ENCODE measurements at regions of chr17 and their contacts with region 1.

Region 1: DNA sequence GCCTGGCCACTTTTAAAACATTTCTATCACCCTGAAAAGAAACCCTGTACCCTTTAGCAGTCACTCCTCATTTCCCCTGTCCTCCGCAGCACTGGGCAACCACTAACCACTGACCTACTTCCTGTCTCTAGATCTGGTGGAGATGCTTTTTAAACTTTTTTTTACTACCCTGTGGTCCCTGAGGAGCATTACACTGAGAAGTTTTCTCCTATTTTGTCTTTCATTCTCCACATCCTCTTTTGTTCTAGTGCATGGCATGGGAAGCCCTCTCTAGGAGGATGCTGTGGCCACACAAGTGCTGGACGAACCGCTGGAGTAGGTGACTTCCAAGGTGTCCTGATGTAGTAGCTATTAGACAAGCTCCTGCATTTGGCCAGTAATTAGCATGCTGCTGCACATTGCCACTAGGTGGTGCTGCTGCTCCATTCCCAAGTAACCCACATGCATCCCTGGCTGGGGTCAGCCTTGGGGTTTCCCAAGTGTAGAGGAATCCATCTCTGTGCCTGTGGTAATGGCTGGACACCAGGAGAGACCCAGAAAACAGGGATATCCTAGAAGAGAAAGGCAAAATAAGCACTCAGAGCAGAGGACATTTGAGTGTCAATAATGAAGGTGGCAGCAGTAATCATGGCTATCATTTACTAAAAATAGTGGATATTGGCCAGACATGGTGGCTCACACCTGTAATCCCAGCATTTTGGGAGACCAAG is 143.8 kb upstream of the CRHR1 start:
- DNase-seq: peak; percentile 67
- ATAC-seq: peak; percentile 86 to 90
- H3K4me3 ChIP-seq: no peak overlapping the region
- H3K27ac ChIP-seq: no peak overlapping the region
- H3K4me1 ChIP-seq: no peaks in the 10 kb centered on the region
- H3K27me3 ChIP-seq: no peaks in the 10 kb centered on the region
- CTCF ChIP-seq: peak; percentile 92

Region 2: GRCh38 chr17:45747911-45748310 is 107.6 kb after region 1 on chr17:
- intact Hi-C with region 1: no loop called
- DNase-seq: no peak
- ATAC-seq: no peak
- H3K4me3 ChIP-seq: no peak overlapping the region
- H3K27ac ChIP-seq: no peak overlapping the region
- H3K4me1 ChIP-seq: no peaks in the 10 kb centered on the region
- H3K27me3 ChIP-seq: peaks cover 14% of the 10 kb centered on the region
- CTCF ChIP-seq: no peak

Region 3: GRCh38 chr17:45834471-45835396 is 194.4 kb after region 1 on chr17:
- intact Hi-C with region 1: loop called (anchors 5 kb)
- DNase-seq: no peak
- ATAC-seq: no peak
- H3K4me3 ChIP-seq: no peak overlapping the region
- H3K27ac ChIP-seq: no peak overlapping the region
- H3K4me1 ChIP-seq: no peaks in the 10 kb centered on the region
- H3K27me3 ChIP-seq: peaks cover 12% of the 10 kb centered on the region
- CTCF ChIP-seq: no peak